Colonic mucosa (tissue), 4 donors: ENCODE measurements at regions of chr2 and their contacts with region 1.

Region 1: GRCh38 chr2:190277234-190278112 is 42.2 kb downstream of the HIBCH start:
- DNase-seq: no peak
- H3K4me3 ChIP-seq: no peak overlapping the region
- H3K27ac ChIP-seq: no peak overlapping the region
- H3K4me1 ChIP-seq: no peaks in the 10 kb centered on the region
- H3K27me3 ChIP-seq: no peaks in the 10 kb centered on the region
- CTCF ChIP-seq: peak; percentile 30

Region 2: GRCh38 chr2:190186238-190186637 is 91.2 kb before region 1 on chr2:
- intact Hi-C with region 1: loop called (anchors 5 kb)
- DNase-seq: no peak
- H3K4me3 ChIP-seq: no peak overlapping the region
- H3K27ac ChIP-seq: no peak overlapping the region
- H3K4me1 ChIP-seq: no peaks in the 10 kb centered on the region
- H3K27me3 ChIP-seq: no peaks in the 10 kb centered on the region
- CTCF ChIP-seq: no peak